BJ (cell line): ENCODE measurements at regions of chr13 and their contacts with region 1.

Region 1: DNA sequence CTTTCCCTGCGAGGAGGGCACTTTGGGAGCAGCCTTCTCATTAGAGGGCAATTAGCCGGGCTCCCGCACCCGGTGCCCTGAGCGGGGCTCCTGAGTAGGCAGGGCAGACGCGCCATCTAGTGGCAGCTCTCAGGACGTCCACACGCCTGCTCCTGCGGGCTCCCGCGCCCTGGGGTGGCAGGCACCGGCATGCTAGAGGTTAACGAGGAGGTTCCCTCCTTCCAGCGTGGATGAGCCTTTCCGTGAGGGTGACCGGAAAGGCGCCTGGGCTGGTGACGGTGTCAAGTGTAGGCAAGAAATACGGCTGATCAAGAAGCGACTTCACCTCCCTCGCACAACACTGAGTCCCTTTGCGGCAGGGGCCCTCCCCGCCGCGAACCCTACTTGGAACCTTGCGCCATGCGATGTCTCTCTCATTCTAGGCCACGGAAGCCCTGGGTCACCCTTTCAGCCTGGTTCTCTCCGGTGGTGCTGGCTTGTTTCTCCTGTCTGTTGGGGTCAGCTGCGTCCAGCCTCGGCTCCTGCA is 67.7 kb downstream of the ALOX5AP start:
- DNase-seq: no peak
- H3K4me3 ChIP-seq: 0 out of 2 replicates have a peak overlapping the region, but pooled peaks have one; percentile 3
- H3K27me3 ChIP-seq: no peaks in the 10 kb centered on the region
- CTCF ChIP-seq: peak; percentile 95

Region 2: DNA sequence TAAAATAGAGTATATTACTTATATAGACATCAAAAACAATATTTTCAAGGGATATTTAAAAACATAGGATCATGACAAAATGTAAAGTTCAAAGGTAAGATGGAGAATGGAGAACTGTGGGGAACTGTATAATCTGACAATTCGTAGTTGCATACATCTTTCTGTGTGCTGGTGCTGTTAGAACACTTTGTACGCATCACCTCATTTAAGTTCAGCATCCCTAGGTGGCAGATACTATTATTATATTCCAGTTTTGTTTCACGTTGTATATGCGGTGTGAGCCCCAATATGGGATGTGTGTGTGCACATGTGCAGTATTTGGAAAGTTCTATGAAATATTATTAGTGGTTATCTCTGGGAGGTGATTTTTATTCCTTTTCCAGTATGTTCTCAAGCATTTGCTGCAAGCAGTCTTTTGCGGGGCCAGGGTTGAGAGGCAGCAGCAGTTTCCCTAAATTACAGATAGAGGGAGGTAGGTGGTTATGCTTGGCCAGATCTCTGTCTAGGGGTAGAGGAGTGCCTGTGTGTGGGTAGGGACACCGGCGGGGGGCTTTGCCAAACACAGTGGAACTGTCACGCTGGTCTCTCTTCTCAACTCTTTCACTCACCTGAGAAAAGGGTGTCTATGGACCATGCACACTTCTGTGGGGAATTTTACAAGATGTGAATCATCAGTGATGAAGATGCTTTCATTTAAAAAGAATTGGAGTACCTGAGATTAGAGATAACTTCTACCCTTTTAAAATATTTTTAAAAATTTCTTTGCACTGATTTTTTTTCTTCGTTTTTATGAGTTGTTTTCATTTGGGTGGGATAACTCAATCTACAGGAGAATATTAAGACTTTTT is 123.3 kb before region 1 on chr13:
- CTCF ChIA-PET with region 1: interaction called, 15 read pairs
- POLR2A ChIA-PET with region 1: no interaction called
- DNase-seq: no peak
- H3K4me3 ChIP-seq: no peak overlapping the region
- H3K27me3 ChIP-seq: no peaks in the 10 kb centered on the region
- CTCF ChIP-seq: peak; percentile 75

Region 3: GRCh38 chr13:30792285-30793000 is 10.6 kb before region 1 on chr13:
- CTCF ChIA-PET with region 1: interaction called, 11 read pairs
- POLR2A ChIA-PET with region 1: no interaction called
- DNase-seq: peak; percentile 72
- H3K4me3 ChIP-seq: no peak overlapping the region
- H3K27me3 ChIP-seq: peaks cover 2% of the 10 kb centered on the region; the same call in 1 of the 2 replicates
- CTCF ChIP-seq: peak; percentile 79